ENCODE measurements at regions of chr2 and their contacts with region 1.

Region 1: DNA sequence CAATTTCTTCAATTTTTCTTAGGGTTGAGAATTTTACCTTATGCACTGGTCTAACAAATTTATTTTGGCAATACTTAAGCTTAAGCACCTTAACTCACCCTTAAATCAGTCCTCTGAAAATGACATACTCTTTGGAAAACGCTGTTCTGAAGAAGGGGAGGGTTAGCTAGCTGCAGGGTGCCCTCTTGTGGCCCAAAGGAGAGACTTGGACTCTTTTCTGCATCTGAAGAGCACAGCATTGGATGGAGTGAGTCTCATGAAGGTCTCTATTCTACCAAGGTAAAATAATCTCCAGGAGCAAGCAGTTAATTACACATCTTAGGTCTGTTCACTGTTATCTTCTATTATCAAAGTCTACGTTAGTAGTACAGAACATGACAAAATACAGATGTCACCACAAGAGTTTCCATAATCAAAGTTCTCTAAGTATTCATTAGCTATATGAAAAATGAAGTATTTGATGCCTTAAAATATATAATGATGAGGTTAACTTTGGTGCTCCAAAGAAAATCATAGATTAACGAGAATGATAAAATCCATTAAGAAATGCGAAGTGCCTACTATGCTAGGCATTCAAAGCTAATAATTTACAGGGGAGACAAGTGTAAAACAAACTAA is 24.4 kb downstream of the PUM2 start:
- DNase-seq: peak; percentile 68
- ATAC-seq: peak; percentile 93
- H3K4me3 ChIP-seq: no peak overlapping the region
- H3K27ac ChIP-seq: no peak overlapping the region
- H3K4me1 ChIP-seq: peaks cover 2% of the 10 kb centered on the region; the same call in 1 of the 2 replicates
- H3K27me3 ChIP-seq: no peaks in the 10 kb centered on the region
- CTCF ChIP-seq: peak; percentile 75
- POLR2A ChIP-seq: no peak
- RAD21 ChIP-seq: peak; percentile 72

Region 2: DNA sequence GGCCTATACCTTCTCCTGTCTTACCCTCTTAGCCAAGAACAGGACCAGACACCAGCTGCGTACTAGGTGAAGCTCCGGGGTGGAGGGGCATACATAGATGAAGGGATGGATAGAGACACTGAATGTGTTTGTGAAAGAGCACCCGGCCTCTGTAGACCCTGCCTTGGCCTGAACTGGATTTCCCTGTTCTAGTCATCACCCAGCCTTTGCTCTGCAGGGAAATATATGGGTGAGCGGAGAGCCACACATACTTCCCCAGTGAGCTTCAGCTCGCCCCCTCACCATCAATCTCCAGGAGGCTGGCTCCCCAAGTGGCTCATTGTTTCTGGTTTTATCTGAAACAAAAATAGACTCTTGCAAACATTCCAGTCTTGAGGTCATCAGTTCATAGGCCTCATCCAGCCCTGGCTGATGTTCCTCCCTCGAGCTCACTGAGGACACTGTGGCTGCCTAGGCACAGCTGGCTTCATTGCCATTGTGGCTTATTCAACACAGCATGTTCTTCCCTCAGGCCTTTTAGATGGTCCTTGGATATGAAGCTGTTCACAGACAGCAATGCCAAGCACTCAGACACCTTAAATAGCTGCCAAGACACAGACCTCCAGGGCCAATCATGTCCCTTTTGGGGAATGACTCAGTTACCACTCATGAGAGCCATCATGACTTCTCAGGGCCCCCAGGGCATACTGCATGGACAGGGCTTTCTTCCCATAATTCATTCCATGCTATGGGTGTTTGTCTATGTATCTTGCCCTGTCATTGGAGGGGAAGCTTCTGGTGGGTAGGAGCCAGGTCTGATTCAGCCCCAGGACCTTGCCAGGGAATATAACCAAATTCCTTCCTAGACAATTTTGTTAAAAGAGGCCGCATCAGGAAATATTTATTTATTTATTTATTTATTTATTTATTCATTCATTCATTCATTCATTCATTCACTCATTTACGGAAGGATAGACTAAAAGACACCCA is 506.9 kb before region 1 on chr2:
- CTCF ChIA-PET with region 1: no interaction called
- POLR2A ChIA-PET with region 1: no interaction called
- dilution Hi-C with region 1: no loop called
- in situ Hi-C with region 1: no loop called
- intact Hi-C with region 1: no loop called
- DNase-seq: peak; percentile 85
- ATAC-seq: peak; percentile 75
- H3K4me3 ChIP-seq: no peak overlapping the region
- H3K27ac ChIP-seq: no peak overlapping the region; the same call in 1 of the 2 replicates
- H3K4me1 ChIP-seq: peaks cover 19% of the 10 kb centered on the region
- H3K27me3 ChIP-seq: no peaks in the 10 kb centered on the region
- CTCF ChIP-seq: no peak
- POLR2A ChIP-seq: no peak
- RAD21 ChIP-seq: no peak

Region 3: DNA sequence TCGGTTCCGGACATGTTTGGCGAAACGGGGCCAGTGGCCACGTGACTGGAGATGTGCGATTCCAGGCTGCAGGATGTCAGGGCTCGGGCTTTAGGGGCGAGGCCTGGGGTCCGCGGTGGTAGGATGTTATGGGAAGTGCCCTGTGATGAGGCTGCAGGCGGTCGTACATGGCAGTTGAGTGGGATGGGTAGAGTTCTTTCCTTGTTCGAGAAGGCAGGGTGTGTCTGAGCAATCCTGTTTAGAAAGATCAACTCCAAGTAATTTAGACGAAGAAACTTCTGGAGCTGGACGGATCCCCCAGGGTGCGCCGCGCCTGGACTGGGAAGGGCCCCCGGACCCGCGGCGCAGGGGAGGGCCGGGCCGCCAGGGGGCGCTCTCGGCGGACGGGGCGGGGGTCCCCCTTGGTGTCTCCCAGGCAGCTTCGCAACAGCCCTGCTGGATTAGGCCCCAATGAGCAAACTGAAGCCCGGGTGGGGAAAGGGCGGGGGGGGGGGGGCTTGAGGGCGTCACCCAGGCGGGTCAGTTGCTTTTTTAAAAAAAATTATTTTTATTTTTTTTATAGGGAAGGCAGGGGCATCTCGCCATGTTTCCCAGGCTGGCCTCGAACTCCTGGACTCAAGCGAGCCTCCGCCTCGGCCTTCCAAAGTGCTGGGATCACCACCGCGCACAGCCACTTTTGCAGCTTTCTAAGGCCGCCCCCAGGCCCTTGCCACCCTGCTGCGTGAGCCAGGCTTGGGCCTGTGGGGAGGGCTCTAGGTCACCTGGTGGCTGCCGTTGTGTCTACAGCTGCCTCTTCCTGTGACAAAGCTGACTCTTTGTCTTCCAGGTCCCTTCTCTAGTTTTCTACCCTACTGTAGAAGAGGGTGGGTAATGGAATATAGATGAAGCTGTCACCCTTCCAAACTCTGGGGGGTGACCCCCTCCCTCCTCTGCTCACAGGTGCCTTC is 83.9 kb before region 1 on chr2:
- CTCF ChIA-PET with region 1: no interaction called
- POLR2A ChIA-PET with region 1: no interaction called
- dilution Hi-C with region 1: no loop called
- in situ Hi-C with region 1: no loop called
- intact Hi-C with region 1: no loop called
- DNase-seq: no peak
- ATAC-seq: no peak
- H3K4me3 ChIP-seq: no peak overlapping the region
- H3K27ac ChIP-seq: no peak overlapping the region
- H3K4me1 ChIP-seq: no peaks in the 10 kb centered on the region
- H3K27me3 ChIP-seq: no peaks in the 10 kb centered on the region
- CTCF ChIP-seq: peak; percentile 34
- POLR2A ChIP-seq: no peak
- RAD21 ChIP-seq: no peak

Region 4: DNA sequence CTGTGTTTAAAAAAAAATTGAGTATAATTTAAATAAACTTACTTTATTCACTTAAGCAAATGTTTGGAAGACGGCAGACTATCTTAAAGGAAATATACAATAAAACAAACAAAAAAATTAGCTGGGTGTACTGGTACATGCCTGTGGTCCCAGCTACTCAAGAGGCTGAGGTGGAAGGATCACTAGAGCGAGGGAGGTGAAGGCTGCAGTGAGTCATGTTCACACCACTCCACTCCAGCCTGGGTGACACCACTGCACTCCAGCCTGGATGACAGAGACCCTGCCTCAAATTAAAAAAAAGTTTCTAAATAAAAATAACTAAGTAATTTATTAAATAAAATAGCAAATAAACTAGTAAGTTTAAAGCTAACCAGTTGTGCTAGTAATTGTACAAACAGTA is 16.9 kb after region 1 on chr2:
- CTCF ChIA-PET with region 1: interaction called, 15 read pairs
- POLR2A ChIA-PET with region 1: no interaction called
- dilution Hi-C with region 1: no loop called
- in situ Hi-C with region 1: no loop called
- intact Hi-C with region 1: loop called (anchors 2 kb)
- DNase-seq: peak; percentile 42
- ATAC-seq: peak; percentile 60; the same call in 1 of the 2 replicates
- H3K4me3 ChIP-seq: no peak overlapping the region
- H3K27ac ChIP-seq: no peak overlapping the region
- H3K4me1 ChIP-seq: peaks cover 5% of the 10 kb centered on the region
- H3K27me3 ChIP-seq: no peaks in the 10 kb centered on the region
- CTCF ChIP-seq: no peak
- POLR2A ChIP-seq: no peak
- RAD21 ChIP-seq: no peak

Region 5: DNA sequence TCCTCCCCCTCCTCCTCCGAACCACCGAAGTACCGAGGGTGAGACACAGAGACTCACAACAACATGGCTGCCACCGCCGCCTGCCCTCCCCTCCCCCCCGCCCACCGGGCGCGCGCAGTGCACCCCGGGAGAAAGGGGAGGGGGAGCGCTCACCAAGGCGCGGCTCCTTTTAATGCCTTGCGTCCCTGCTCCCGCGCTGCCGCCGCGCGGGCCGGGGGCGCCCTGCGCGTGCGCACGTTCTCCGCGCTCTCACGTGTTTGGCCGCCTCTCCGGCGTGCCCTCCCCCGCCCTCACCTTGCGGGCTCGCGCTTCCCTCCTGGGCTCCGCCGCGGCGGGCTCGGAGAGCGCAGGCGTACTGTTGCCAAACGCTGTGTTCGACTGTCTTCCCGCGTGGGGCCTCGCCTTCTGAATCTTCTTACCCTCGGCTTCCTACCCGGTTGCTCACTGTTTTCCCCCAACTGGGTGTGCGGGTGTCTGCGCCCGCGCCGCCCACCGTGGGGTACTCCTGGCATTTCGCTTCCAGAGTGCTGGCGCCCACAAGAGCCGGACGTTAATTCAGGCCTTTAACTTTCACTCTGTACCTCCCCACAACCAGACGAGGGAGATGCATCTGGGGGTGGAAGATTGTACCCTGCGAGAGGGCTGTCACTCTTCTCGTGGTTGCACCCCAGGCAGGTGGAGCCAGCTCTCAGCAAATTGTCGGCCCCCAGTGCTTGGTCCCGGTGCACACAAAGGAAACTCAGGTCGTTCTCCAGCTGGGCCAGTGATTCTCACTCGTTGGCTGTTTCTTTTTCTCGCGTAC is 24.7 kb after region 1 on chr2 and contains the start of gene PUM2:
- CTCF ChIA-PET with region 1: interaction called, 7 read pairs
- POLR2A ChIA-PET with region 1: no interaction called
- dilution Hi-C with region 1: no loop called
- in situ Hi-C with region 1: no loop called
- intact Hi-C with region 1: loop called (anchors 1 kb)
- DNase-seq: peak; percentile 94
- ATAC-seq: peak; percentile 94
- H3K4me3 ChIP-seq: peak within 1 kb of the TSS; percentile 99
- H3K27ac ChIP-seq: peak within 1 kb of the TSS; percentile 98
- H3K4me1 ChIP-seq: peaks cover 10% of the 10 kb centered on the region
- H3K27me3 ChIP-seq: no peaks in the 10 kb centered on the region
- CTCF ChIP-seq: no peak
- POLR2A ChIP-seq: no peak; the same call in 1 of the 2 replicates
- RAD21 ChIP-seq: no peak
- total RNA-seq, gene PUM2: 35.6 and 38.4 TPM in 2 replicates